Aorta (tissue), 5 donors: ENCODE measurements at regions of chr7 and their contacts with region 1.

Region 1: DNA sequence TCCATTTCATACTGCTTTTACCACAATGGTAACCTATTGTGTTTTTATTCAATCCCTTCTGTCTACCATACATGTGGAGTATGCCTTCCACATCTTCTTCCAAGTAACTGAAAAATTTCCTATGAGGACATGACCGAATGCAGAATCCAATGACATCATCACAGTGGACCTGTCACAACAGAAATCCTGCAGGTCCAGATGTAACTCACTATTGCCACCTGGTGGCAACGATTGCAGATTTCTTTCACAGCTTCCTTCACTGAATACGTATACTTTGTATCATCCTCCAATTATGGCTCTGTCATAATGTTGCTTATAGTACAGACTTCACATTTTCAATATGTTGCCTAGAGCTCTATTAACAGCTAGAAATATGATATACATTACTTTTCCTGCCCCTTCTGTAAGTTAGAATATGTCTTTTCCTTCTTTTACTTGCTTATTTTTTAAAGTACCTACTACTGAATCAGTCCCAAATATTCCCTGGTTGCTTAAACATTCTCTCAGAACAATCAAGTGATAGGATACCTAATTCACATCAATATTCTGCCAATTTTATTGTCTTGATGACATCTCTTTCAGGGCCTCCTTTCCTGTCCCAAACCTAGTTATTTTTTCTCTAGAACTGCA is 45.4 kb downstream of the SLC13A1 start:
- DNase-seq: peak; percentile 57 to 62
- ATAC-seq: peak; percentile 83
- H3K4me3 ChIP-seq: no peak overlapping the region
- H3K27ac ChIP-seq: no peak overlapping the region
- H3K4me1 ChIP-seq: no peaks in the 10 kb centered on the region
- H3K27me3 ChIP-seq: no peaks in the 10 kb centered on the region

Region 2: DNA sequence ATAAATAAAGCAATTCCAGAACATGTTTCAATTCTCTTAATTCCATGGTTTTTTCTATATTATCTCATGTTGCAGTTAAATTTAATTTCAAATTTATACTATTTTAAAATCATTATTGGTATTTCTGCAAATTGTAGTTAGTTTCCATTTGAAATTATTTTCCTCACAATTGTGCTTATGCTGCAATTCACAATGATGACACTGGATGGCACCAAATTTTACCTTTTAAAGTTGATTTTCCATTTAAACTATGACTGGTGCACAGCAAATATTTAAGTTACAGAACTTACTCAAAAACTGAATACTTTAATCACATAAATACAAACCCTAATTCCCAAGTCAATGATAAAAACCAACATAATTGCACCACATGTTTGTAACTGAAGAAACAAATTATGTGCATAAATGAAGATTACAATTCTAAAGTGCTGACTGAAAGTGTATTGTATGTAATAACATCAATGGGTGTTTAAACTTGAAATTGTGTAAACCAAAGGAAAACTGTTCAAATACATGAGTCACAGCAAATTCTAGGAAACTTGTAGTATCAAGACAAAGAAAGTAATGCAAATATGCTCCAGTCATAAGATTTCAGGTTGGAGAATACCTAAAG is 935.0 kb before region 1 on chr7:
- intact Hi-C with region 1: loop called (anchors 10 kb)
- DNase-seq: no peak
- ATAC-seq: no peak
- H3K4me3 ChIP-seq: no peak overlapping the region
- H3K27ac ChIP-seq: no peak overlapping the region
- H3K4me1 ChIP-seq: no peaks in the 10 kb centered on the region
- H3K27me3 ChIP-seq: no peaks in the 10 kb centered on the region

Region 3: GRCh38 chr7:122225874-122226273 is 928.5 kb before region 1 on chr7:
- intact Hi-C with region 1: loop called in 1 of 2 experiments (anchors 10 kb)
- DNase-seq: no peak
- ATAC-seq: no peak
- H3K4me3 ChIP-seq: no peak overlapping the region
- H3K27ac ChIP-seq: no peak overlapping the region
- H3K4me1 ChIP-seq: no peaks in the 10 kb centered on the region
- H3K27me3 ChIP-seq: no peaks in the 10 kb centered on the region

Region 4: DNA sequence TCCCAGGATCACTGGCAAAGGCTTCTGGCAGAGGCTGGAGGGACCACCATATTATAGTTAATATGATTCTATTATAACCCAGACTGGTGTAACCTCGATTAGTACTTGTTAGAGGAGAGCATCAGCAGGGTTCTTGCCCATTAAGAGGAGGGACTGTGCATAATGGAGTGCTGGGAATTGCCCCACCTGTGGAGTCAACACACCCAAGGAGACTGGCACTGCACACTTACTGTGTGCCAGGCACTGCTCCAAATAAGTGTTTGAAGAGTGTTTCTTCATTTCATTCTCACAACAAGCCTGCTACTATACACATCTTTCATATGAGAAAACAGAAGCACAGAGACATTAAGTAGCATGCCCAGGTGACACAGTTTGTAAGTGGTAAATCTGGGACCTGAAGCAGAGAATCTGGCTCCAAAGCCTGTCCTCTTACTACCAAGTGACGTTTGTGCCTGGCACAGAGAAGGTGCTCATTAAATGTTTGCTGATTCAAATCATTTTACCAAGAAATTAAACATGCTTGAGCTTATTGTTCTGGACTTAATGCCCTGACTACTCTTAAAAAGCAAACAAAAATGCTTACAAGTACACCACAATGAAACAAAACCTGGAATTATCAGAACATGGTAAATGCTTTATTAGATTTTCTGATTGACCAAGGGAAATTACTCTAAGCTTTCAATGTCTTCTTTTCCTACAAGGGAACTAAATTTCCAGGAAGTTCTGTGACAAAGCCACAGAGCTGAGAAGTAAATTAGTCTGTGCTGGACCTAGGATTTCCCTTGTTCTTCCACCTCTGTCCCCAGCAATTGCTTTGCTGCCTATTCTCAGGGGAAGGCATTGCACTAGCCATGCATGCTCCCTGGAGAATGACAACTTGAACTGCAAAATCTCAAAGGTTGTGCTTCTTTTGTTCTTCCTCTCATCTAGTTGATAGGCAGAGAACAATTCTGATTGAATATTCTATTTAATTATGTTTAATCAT is 44.6 kb after region 1 on chr7:
- intact Hi-C with region 1: no loop called
- DNase-seq: no peak
- ATAC-seq: no peak
- H3K4me3 ChIP-seq: no peak overlapping the region
- H3K27ac ChIP-seq: no peak overlapping the region
- H3K4me1 ChIP-seq: no peaks in the 10 kb centered on the region
- H3K27me3 ChIP-seq: no peaks in the 10 kb centered on the region